Heart right ventricle (tissue), 16 donors: ENCODE measurements at regions of chr6 and their contacts with region 1.

Region 1: DNA sequence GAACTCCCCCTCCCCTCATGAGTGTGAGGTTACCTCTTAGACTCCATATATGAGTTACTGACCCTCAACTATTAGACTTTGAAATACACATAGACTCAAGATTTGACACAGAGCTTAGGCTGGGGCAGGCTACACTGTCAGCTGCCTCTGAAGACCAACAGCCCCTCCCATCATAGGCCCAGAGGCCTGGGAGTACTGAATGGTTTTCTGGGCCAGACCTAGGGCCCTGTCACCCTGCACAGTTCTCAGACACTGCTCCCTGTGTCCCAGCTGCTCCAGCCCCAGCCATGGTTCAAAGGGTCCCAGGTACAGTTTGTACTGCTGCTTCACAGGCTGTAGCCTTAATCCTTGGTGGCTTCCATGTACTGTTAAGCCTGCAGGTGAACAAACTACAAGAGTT is 132.1 kb upstream of the MOCS1 start:
- DNase-seq: no peak
- ATAC-seq: no peak
- H3K4me3 ChIP-seq: no peak overlapping the region
- H3K27ac ChIP-seq: no peak overlapping the region
- H3K4me1 ChIP-seq: no peaks in the 10 kb centered on the region
- H3K27me3 ChIP-seq: peaks cover 0 to 8% (median 1%) of the 10 kb centered on the region in 7 donors
- CTCF ChIP-seq: no peak

Region 2: GRCh38 chr6:39517756-39518155 is 548.6 kb before region 1 on chr6:
- intact Hi-C with region 1: no loop called
- DNase-seq: no peak
- ATAC-seq: no peak
- H3K4me3 ChIP-seq: no peak overlapping the region
- H3K27ac ChIP-seq: no peak overlapping the region
- H3K4me1 ChIP-seq: no peaks in the 10 kb centered on the region
- H3K27me3 ChIP-seq: no peaks in the 10 kb centered on the region
- CTCF ChIP-seq: no peak

Region 3: GRCh38 chr6:40098774-40099173 is 32.4 kb after region 1 on chr6:
- intact Hi-C with region 1: no loop called
- DNase-seq: no peak
- ATAC-seq: no peak
- H3K4me3 ChIP-seq: no peak overlapping the region
- H3K27ac ChIP-seq: no peak overlapping the region
- H3K4me1 ChIP-seq: no peaks in the 10 kb centered on the region
- H3K27me3 ChIP-seq: peaks cover 0 to 13% (median 0%) of the 10 kb centered on the region in 7 donors
- CTCF ChIP-seq: no peak

Region 4: GRCh38 chr6:40611912-40612311 is 545.5 kb after region 1 on chr6:
- intact Hi-C with region 1: loop called in 1 of 10 experiments (anchors 5 kb)
- DNase-seq: peak in 1 of 2 donors; percentile 25
- ATAC-seq: peak in 5 of 8 donors; percentile 25 to 67 (median 59)
- H3K4me3 ChIP-seq: no peak overlapping the region
- H3K27ac ChIP-seq: no peak overlapping the region
- H3K4me1 ChIP-seq: no peaks in the 10 kb centered on the region
- H3K27me3 ChIP-seq: peaks cover 0 to 77% (median 20%) of the 10 kb centered on the region in 7 donors
- CTCF ChIP-seq: no peak